Panc1 (cell line): ENCODE measurements at regions of chr21 and their contacts with region 1.

Region 1: GRCh38 chr21:32597205-32597604 is 11.9 kb upstream of the TCP10L start:
- DNase-seq: peak; percentile 74
- ATAC-seq: peak; percentile 75
- H3K4me3 ChIP-seq: no peak overlapping the region
- H3K27ac ChIP-seq: no peak overlapping the region
- H3K4me1 ChIP-seq: peaks cover 3% of the 10 kb centered on the region; the same call in 1 of the 2 replicates
- H3K27me3 ChIP-seq: no peaks in the 10 kb centered on the region
- CTCF ChIP-seq: no peak

Region 2: DNA sequence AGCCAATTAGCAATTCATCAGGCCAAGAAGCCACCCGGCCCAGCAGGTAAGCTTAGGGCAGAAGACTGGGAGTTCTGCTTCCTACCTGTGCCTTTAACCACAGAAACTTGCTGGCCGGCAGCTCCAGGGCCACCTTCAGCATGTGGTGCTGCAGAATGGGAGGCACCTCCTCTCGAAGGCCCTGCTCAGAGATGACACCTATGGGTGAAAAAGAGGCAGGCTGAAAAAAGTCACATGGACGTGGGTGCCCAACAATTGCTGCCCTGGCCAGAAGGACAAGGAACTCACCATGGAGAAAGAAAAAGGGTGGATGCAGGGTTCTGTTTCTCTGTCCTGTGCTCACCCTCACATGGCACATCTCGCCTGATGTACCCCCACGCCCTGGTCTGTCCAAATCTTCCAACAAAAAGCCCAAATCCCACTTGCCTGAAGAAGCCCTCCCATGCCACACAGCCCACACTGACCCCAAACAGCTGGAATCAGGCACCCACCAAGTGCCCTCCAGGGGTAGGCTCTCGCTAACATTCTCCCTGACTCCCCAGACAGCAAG is 237.4 kb before region 1 on chr21:
- CTCF ChIA-PET with region 1: no interaction called
- POLR2A ChIA-PET with region 1: no interaction called
- in situ Hi-C with region 1: no loop called
- intact Hi-C with region 1: no loop called
- DNase-seq: no peak
- ATAC-seq: peak; percentile 80
- H3K4me3 ChIP-seq: no peak overlapping the region
- H3K27ac ChIP-seq: no peak overlapping the region
- H3K4me1 ChIP-seq: no peaks in the 10 kb centered on the region
- H3K27me3 ChIP-seq: no peaks in the 10 kb centered on the region
- CTCF ChIP-seq: no peak; the same call in 1 of the 2 replicates

Region 3: GRCh38 chr21:32514275-32515055 is 82.7 kb before region 1 on chr21:
- CTCF ChIA-PET with region 1: no interaction called
- POLR2A ChIA-PET with region 1: interaction called, 15 read pairs
- in situ Hi-C with region 1: no loop called
- intact Hi-C with region 1: no loop called
- DNase-seq: no peak
- ATAC-seq: no peak
- H3K4me3 ChIP-seq: no peak overlapping the region
- H3K27ac ChIP-seq: no peak overlapping the region
- H3K4me1 ChIP-seq: no peaks in the 10 kb centered on the region
- H3K27me3 ChIP-seq: no peaks in the 10 kb centered on the region
- CTCF ChIP-seq: no peak

Region 4: DNA sequence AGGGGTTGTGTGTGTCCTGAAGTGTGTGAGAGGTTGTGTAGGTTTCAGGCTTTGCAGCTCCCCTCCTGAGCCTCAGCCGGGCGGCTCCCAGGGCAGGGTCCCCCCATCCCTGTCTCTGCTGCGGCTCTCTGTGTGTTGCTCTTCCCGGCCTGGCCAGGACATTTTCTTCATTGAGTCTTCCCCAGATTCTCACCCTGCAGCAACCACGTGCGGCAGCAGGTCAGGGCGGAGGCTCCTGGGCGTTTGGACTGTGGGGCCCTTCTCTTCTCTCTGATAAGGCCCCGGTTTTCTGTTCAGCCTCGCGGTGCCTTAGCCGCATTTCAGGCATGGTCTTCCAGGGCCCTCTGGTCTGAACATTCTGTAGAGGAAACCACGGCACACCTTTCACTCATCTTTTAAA is 10.1 kb before region 1 on chr21:
- CTCF ChIA-PET with region 1: no interaction called
- POLR2A ChIA-PET with region 1: no interaction called
- in situ Hi-C with region 1: no loop called
- intact Hi-C with region 1: no loop called
- DNase-seq: no peak
- ATAC-seq: no peak
- H3K4me3 ChIP-seq: no peak overlapping the region
- H3K27ac ChIP-seq: no peak overlapping the region
- H3K4me1 ChIP-seq: no peaks in the 10 kb centered on the region
- H3K27me3 ChIP-seq: no peaks in the 10 kb centered on the region
- CTCF ChIP-seq: no peak